GM10248 (cell line): ENCODE measurements at regions of chr18 and their contacts with region 1.

Region 1: GRCh38 chr18:8478166-8478967 is 130.9 kb upstream of the RAB12 start:
- DNase-seq: peak; percentile 86
- CTCF ChIP-seq: peak; percentile 83

Region 2: GRCh38 chr18:8493141-8493540 is 14.8 kb after region 1 on chr18:
- CTCF ChIA-PET with region 1: interaction called, 17 read pairs
- POLR2A ChIA-PET with region 1: no interaction called
- DNase-seq: no peak
- CTCF ChIP-seq: no peak